Activated B cell treated with CpG ODN at 0.5 μM for 24 hours (primary cell): ENCODE measurements at regions of chr22 and their contacts with region 1.

Region 1: GRCh38 chr22:31345331-31346254 is 553 bp downstream of the PATZ1 start:
- DNase-seq: peak; percentile 89
- ATAC-seq: peak; percentile 58
- H3K4me3 Mint-ChIP-seq: peak overlapping the region; percentile 83
- H3K27ac Mint-ChIP-seq: peak overlapping the region; percentile 80
- H3K4me1 Mint-ChIP-seq: peaks cover 50% of the 10 kb centered on the region
- H3K27me3 Mint-ChIP-seq: no peaks in the 10 kb centered on the region
- CTCF ChIP-seq: peak; percentile 56

Region 2: DNA sequence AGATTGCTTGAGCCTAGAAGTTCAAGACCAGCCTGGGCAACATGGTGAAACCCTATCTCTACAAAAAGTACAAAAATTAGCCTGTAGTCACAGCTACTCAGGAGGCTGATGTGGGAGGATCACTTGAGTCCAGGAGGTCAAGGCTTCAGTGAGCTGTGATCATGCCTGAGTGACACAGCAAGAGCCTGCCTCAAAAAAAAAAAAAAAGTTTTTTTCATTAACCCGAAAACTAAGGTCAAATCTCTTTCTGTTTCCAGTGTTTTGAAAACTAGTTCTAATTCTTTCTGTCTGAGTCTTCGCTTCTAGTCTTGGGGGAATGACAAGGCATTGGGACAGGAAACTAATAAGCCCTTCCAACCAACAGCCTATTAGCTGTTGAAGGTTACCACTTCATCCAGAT is 1156.7 kb before region 1 on chr22:
- CTCF ChIA-PET with region 1: no interaction called
- POLR2A ChIA-PET with region 1: interaction called, 10 read pairs
- intact Hi-C with region 1: no loop called
- DNase-seq: no peak
- ATAC-seq: no peak
- H3K4me3 Mint-ChIP-seq: no peak overlapping the region
- H3K27ac Mint-ChIP-seq: no peak overlapping the region
- H3K4me1 Mint-ChIP-seq: peaks cover 22% of the 10 kb centered on the region
- H3K27me3 Mint-ChIP-seq: peaks cover 12% of the 10 kb centered on the region
- CTCF ChIP-seq: no peak

Region 3: GRCh38 chr22:31399211-31400028 is 53.8 kb after region 1 on chr22 and contains the start of gene DRG1:
- CTCF ChIA-PET with region 1: interaction called, 8 read pairs
- POLR2A ChIA-PET with region 1: interaction called, 66 read pairs
- intact Hi-C with region 1: loop called (anchors 1 kb)
- DNase-seq: peak; percentile 97
- ATAC-seq: peak; percentile 98
- H3K4me3 Mint-ChIP-seq: peak within 1 kb of the TSS; percentile 93
- H3K27ac Mint-ChIP-seq: peak within 1 kb of the TSS; percentile 88
- H3K4me1 Mint-ChIP-seq: peaks cover 20% of the 10 kb centered on the region
- H3K27me3 Mint-ChIP-seq: no peaks in the 10 kb centered on the region
- CTCF ChIP-seq: no peak
- total RNA-seq, gene DRG1: 68.5 and 71.1 TPM in 2 replicates